Aorta (tissue), 5 donors: ENCODE measurements at regions of chr18 and their contacts with region 1.

Region 1: DNA sequence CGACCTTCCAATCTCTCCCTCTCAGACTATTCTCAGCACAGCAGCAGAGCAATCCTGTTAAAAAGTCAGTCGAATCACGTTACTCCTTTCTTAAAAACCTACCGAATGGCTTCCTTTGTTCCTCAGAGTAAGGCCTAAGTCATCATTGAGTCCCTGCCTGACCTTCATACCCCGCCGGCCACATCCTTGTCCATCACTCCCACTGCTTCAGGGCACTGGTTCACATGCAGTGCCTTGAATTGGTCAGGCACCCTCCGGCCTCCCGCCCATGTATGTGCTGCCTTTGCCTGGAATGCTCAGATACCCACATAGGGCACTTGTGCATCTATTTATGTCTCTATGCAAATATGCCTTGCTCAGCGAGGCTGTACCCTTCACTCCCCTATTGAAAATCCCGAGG is 206.4 kb downstream of the DLGAP1 start:
- DNase-seq: no peak
- ATAC-seq: no peak
- H3K4me3 ChIP-seq: no peak overlapping the region
- H3K27ac ChIP-seq: no peak overlapping the region
- H3K4me1 ChIP-seq: no peaks in the 10 kb centered on the region
- H3K27me3 ChIP-seq: no peaks in the 10 kb centered on the region

Region 2: GRCh38 chr18:4207383-4207985 is 41.2 kb before region 1 on chr18:
- intact Hi-C with region 1: loop called in 1 of 2 experiments (anchors 5 kb)
- DNase-seq: no peak
- ATAC-seq: no peak
- H3K4me3 ChIP-seq: no peak overlapping the region
- H3K27ac ChIP-seq: no peak overlapping the region
- H3K4me1 ChIP-seq: no peaks in the 10 kb centered on the region
- H3K27me3 ChIP-seq: no peaks in the 10 kb centered on the region